ENCODE measurements at regions of chr21 and their contacts with region 1.

Region 1: GRCh38 chr21:42009831-42010523 is at the start of gene ZBTB21:
- DNase-seq: peak; percentile 98
- H3K4me3 ChIP-seq: peak within 1 kb of the TSS; percentile 89
- H3K27ac ChIP-seq: peak within 1 kb of the TSS; percentile 97
- H3K4me1 ChIP-seq: peaks cover 7% of the 10 kb centered on the region
- H3K27me3 ChIP-seq: no peaks in the 10 kb centered on the region
- CTCF ChIP-seq: no peak
- total RNA-seq, gene ZBTB21: 19.5 and 20.7 TPM in 2 replicates

Region 2: DNA sequence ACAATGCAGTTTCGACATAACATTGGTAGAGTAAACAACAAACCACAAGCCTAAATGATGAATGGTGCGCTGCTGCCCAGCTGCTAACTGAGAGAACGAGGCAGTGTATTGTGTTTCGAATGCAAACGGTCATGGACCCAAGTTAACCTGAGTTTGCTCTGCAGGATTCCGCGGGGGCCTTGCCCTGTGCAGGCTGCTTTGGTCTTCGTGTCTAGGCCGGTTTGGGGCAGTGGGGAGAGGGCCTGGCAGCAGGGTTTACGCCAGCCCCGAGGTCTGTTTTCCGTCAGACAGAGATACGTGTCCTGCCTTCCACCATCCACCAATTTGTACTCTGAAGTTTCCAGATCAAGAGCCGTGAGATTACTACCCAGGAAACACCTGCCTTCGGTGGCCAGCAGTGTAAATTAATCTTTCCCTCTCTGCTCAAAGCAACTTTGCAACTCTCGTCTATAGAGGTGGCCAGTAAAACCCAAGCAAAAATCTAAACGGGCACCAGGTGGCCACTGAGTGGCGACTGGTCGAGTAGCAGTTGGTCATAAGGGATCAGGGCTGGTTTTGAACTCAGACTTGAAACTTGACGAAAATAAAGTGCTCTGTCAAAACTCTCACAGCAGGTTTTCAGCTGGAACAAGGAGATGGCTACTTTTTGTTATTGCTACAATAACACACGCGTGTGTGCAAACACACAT is 124.5 kb before region 1 on chr21:
- CTCF ChIA-PET with region 1: no interaction called
- POLR2A ChIA-PET with region 1: no interaction called
- intact Hi-C with region 1: loop called (anchors 5 kb)
- DNase-seq: no peak
- H3K4me3 ChIP-seq: no peak overlapping the region
- H3K27ac ChIP-seq: no peak overlapping the region
- H3K4me1 ChIP-seq: no peaks in the 10 kb centered on the region
- H3K27me3 ChIP-seq: no peaks in the 10 kb centered on the region
- CTCF ChIP-seq: no peak

Region 3: DNA sequence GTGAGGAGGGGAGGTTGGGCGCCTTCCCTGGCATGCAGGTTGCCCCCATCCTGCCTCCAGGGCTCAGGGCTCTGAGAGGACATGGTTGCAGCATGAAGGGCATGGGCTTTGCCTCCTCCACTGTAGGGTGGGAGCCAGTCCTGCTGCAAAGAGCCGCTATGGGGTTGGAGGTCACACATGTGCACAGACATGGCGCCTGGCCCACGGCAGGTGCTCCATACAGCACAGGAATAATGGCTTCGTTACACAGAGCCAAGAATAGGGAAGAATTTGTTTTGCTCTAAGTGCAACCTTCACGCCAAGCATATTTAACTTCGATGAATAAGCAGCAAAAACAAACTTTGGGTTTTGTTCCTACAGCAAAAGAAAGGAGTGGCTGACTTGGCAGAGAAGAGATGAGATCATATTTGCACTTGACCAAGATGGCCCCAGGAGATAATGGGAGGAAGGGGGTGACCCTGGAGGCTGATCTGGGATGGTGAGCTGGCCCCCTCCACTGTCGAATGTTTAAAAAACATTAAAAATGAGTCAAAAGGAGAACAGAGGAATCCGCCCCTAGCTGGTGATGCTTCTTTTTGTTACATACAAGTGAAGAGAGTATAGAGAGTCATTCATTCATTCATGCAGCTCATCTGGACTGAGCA is 43.8 kb before region 1 on chr21:
- CTCF ChIA-PET with region 1: no interaction called
- POLR2A ChIA-PET with region 1: no interaction called
- intact Hi-C with region 1: loop called (anchors 5 kb)
- DNase-seq: no peak
- H3K4me3 ChIP-seq: no peak overlapping the region
- H3K27ac ChIP-seq: no peak overlapping the region
- H3K4me1 ChIP-seq: peaks cover 17% of the 10 kb centered on the region
- H3K27me3 ChIP-seq: no peaks in the 10 kb centered on the region
- CTCF ChIP-seq: no peak

Region 4: DNA sequence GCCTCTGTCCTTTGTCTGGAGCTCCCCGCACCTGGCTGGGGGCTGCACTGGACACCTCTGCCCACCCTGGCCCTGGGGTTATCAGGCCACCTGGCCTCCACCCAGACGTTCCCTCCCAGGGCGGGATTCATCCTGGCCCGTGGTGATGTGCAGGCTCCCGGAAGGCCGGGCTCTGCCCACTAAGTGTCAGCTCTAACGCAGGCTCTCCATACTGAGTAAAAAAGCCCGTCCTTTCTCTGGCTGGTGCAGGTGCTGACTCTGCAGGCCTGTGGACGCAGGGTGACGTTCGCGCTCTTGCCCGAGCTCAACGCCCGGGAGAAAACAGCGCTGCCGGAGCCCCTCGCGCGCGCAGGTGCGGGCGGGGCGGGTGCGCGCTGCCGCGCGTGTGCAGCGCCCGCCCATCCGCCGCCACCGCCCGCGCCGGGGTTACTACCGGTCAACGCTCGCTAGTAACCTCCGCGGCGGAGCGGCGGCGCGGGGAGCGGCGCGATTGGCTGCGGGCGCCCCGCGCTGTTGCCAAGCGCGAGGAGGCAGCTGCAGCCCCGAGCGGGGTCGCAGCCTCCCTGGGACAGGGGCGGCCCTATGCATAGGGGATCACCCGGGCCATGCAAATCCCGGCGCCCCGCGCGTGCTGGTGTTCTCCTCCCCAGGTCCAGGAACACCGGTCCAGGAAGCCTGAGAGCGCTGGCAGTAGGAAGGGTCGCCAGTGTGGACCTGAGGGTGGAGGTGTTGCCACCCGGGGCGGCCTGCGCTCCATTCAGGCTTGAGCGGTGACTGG is 224.7 kb after region 1 on chr21:
- CTCF ChIA-PET with region 1: no interaction called
- POLR2A ChIA-PET with region 1: no interaction called
- intact Hi-C with region 1: no loop called
- DNase-seq: peak; percentile 80
- H3K4me3 ChIP-seq: peak overlapping the region; percentile 28
- H3K27ac ChIP-seq: peak overlapping the region; percentile 85
- H3K4me1 ChIP-seq: peaks cover 34% of the 10 kb centered on the region
- H3K27me3 ChIP-seq: no peaks in the 10 kb centered on the region
- CTCF ChIP-seq: no peak

Region 5: DNA sequence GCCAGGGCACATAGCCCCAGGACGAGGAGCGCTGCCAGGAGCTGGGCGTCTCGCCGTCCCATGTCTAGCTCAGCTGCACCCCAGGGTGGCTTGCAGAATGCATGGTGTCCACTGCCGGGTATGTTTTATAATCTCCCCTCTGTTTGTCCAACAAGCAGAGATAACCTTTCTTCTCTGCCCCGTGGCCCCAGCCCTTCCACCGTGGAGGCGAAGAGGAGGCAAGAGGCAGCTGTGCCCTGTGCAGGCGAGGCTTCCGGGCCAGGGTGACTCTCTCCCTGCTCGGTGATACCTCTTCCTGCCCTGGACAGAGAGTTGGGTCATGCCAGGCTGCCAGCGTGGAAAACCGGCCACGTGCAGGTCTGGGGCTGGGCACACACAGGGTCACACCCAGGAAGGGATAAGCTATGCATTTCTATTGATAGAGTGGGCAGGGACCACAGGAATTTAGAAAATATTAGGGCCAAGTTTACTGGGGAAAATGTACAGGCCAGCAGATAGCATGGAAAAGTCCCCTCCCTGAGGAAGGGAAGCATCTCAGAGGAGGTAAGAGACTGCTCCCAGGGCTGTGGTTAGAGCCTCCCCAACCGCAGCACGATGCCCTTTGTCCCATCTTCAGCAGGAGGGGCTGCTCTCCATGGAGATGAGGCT is 341.0 kb after region 1 on chr21 and contains the start of gene TFF2:
- CTCF ChIA-PET with region 1: no interaction called
- POLR2A ChIA-PET with region 1: no interaction called
- intact Hi-C with region 1: no loop called
- DNase-seq: no peak
- H3K4me3 ChIP-seq: no peak within 1 kb of the TSS
- H3K27ac ChIP-seq: no peak within 1 kb of the TSS
- H3K4me1 ChIP-seq: no peaks in the 10 kb centered on the region
- H3K27me3 ChIP-seq: no peaks in the 10 kb centered on the region
- CTCF ChIP-seq: no peak
- total RNA-seq, gene TFF2: not detected in 2 replicates

Region 6: DNA sequence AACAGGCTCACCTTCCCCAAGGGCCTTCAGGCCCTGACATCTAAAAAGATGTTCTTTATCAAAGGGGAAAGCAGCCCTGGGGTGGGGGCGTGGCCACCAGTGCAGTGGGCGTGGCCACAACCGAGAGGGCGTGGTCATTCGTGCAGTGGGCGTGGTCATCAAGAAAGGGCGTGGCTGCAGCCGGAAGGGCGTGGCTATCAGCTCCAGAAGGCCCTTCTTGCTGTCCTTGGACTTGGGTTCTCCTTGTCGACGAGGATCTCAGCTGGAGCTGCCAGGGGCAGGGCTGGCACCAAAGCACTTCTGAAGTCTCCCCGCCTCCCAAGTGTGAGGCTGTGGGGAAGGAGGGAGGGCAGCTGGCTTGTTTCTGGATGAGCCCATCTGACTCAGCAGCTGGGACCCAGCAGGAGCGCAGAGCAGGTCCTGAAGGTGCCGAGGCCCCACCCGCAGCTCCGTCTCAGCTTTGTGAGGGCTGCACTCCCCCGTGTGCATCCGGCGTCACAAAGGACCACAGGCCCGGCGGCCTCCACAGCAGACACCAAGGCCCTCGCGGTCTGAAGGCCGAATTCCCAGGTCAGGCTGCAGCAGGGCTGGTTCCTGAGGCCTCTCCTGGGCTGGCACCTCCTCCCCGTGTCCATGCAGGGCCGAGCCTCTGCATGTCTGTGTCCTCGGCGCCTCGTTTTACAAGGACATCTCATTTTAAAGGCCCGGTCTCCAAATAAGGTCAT is 656.2 kb after region 1 on chr21:
- CTCF ChIA-PET with region 1: no interaction called
- POLR2A ChIA-PET with region 1: no interaction called
- intact Hi-C with region 1: no loop called
- DNase-seq: peak; percentile 34
- H3K4me3 ChIP-seq: no peak overlapping the region
- H3K27ac ChIP-seq: no peak overlapping the region
- H3K4me1 ChIP-seq: peaks cover 32% of the 10 kb centered on the region
- H3K27me3 ChIP-seq: no peaks in the 10 kb centered on the region
- CTCF ChIP-seq: no peak